PC-9 (cell line): ENCODE measurements at regions of chr12 and their contacts with region 1.

Region 1: GRCh38 chr12:106022568-106023012 is 116.2 kb downstream of the NUAK1 start:
- DNase-seq: no peak
- H3K4me3 ChIP-seq: no peak overlapping the region
- H3K27ac ChIP-seq: no peak overlapping the region
- H3K4me1 ChIP-seq: no peaks in the 10 kb centered on the region
- H3K27me3 ChIP-seq: no peaks in the 10 kb centered on the region
- CTCF ChIP-seq: no peak

Region 2: GRCh38 chr12:105676694-105677093 is 345.9 kb before region 1 on chr12:
- CTCF ChIA-PET with region 1: interaction called, 13 read pairs
- POLR2A ChIA-PET with region 1: no interaction called
- intact Hi-C with region 1: no loop called
- DNase-seq: peak in 1 of 2 experiments; percentile 52
- H3K4me3 ChIP-seq: no peak overlapping the region
- H3K27ac ChIP-seq: no peak overlapping the region
- H3K4me1 ChIP-seq: no peaks in the 10 kb centered on the region
- H3K27me3 ChIP-seq: no peaks in the 10 kb centered on the region
- CTCF ChIP-seq: no peak

Region 3: DNA sequence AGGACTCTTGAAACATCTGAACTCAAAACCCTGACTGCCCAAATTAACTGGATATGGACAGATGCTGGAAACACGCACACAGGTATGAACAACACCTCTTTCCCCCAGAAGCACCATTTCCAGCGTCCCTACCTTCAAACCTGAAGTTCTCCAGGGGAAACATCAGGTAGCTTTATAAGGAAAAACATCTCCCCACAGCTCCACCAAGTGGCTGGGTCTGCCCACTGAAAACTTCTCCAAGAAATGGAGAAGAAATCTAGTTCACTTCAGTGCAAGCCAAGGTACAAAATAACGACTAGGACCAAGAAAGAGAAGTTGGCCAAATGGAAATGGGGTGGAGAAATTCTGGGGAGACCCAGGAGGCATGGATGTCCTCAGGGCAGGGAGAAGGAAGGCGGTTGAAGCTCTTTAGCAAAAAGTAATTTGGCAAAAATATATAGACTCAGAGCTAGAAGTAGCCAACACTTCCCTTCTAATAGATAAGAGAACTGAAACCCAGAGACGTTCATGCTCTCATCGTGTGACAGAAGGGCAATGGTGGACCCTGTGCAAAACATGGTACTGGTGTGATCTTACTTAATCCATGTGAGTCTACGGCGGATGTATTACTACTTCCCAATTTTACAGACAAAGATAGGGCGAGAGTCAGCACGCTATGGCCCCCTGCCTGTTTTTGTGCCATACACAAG is 126.7 kb after region 1 on chr12:
- CTCF ChIA-PET with region 1: interaction called, 14 read pairs
- POLR2A ChIA-PET with region 1: no interaction called
- intact Hi-C with region 1: no loop called
- DNase-seq: peak in 1 of 2 experiments; percentile 27
- H3K4me3 ChIP-seq: no peak overlapping the region
- H3K27ac ChIP-seq: no peak overlapping the region
- H3K4me1 ChIP-seq: no peaks in the 10 kb centered on the region
- H3K27me3 ChIP-seq: no peaks in the 10 kb centered on the region
- CTCF ChIP-seq: peak; percentile 68; the same call in 1 of the 2 replicates